Mammary epithelial cell (primary cell): ENCODE measurements at regions of chr4 and their contacts with region 1.

Region 1: DNA sequence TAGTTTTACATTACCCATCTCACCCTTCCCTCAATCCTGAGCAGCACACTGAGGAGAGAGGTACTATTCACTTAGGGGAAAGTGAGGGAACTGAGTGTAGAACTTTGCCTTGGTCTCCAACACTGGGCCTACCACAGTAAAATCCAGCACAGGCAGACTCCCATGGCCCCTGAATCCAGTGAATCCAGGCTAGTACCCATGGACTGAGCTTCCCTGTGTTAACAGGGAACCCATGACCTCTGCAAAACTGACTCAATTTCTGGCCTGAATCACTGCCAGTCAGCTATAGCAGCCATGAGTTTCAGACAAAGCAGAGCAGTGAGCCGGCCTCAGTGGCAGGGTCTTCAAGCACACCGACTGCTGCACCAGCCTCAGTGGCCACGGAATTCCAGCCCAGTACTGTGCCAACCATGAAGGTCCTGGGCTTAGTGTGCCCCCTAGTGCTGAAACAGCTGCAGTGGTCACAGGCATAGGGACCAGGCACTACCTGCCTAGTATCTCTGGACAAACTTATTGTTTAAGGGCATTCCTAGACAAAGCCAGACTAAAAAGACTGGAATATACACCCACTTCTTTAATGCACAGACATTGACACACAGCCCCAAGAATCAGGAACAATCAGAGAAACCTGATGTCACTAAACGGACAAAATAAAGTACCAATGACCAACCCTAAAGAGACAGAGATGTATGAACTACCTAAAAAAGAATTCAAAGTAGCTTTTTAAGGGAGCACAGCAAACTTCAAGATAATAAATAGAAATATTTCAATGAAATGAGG is 127.4 kb upstream of the RPL34 start:
- DNase-seq: peak; percentile 39
- H3K4me3 ChIP-seq: no peak overlapping the region
- H3K27ac ChIP-seq: no peak overlapping the region
- H3K4me1 ChIP-seq: no peaks in the 10 kb centered on the region
- H3K27me3 ChIP-seq: peaks cover 11% of the 10 kb centered on the region
- CTCF ChIP-seq: peak; percentile 72 to 89

Region 2: DNA sequence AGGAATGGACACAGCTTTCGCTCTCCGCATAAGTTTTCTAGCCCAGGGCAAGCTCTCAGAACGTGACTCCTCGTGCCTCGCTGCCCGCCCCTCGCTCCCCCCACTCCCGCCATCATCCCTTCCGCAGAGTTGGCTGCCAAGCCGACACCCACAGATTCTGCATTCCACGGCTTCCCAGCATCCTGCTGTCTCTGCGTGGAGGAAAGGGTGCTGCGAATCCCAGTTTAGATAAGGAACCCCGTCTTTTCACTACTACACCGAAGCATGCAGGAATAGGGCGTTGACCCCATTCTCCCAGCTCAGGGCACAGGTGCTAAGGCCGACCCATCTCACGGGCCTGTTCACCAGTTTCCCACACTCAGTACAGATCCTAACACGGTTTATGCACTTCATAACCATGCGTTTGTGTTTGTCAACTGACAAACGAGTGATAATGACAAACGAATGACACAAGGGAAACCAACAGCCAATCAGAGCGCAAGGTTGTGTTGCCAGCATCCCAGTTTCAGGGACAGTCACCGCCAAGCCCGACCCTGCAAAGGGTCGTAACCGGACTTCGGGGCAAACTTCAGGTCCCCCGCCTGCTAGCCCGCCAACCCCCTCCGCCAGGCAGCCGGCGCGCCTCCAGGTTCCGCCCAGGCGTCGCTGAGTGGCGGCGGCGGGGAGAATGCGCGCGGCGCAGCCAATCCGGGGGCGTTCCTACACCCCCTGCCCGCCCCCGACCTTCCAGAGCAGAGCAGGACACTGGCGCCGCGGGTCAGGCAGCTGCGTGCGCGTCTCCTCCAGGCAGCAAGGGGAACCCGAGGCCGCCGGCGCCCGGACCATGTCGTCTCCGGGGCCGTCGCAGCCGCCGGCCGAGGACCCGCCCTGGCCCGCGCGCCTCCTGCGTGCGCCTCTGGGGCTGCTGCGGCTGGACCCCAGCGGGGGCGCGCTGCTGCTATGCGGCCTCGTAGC is 561.9 kb before region 1 on chr4 and contains the start of gene CYP2U1:
- CTCF ChIA-PET with region 1: no interaction called
- dilution Hi-C with region 1: no loop called
- in situ Hi-C with region 1: no loop called
- intact Hi-C with region 1: loop called (anchors 10 kb)
- DNase-seq: peak; percentile 73
- H3K4me3 ChIP-seq: peak within 1 kb of the TSS; percentile 52 to 78 (median 66)
- H3K27ac ChIP-seq: no peak within 1 kb of the TSS
- H3K4me1 ChIP-seq: peaks cover 24% of the 10 kb centered on the region
- H3K27me3 ChIP-seq: no peaks in the 10 kb centered on the region
- CTCF ChIP-seq: peak in 1 of 2 donors; percentile 8
- total RNA-seq, gene CYP2U1: 7.5 to 30.7 TPM

Region 3: GRCh38 chr4:108018040-108018883 is 474.7 kb before region 1 on chr4:
- CTCF ChIA-PET with region 1: no interaction called
- dilution Hi-C with region 1: no loop called
- in situ Hi-C with region 1: no loop called
- intact Hi-C with region 1: loop called (anchors 1 kb)
- DNase-seq: peak; percentile 54
- H3K4me3 ChIP-seq: no peak overlapping the region
- H3K27ac ChIP-seq: no peak overlapping the region
- H3K4me1 ChIP-seq: no peaks in the 10 kb centered on the region
- H3K27me3 ChIP-seq: no peaks in the 10 kb centered on the region
- CTCF ChIP-seq: peak; percentile 84 to 89

Region 4: GRCh38 chr4:108030332-108030731 is 462.7 kb before region 1 on chr4:
- CTCF ChIA-PET with region 1: no interaction called
- dilution Hi-C with region 1: no loop called
- in situ Hi-C with region 1: no loop called
- intact Hi-C with region 1: loop called (anchors 1 kb)
- DNase-seq: peak; percentile 63
- H3K4me3 ChIP-seq: no peak overlapping the region
- H3K27ac ChIP-seq: no peak overlapping the region
- H3K4me1 ChIP-seq: no peaks in the 10 kb centered on the region
- H3K27me3 ChIP-seq: no peaks in the 10 kb centered on the region
- CTCF ChIP-seq: peak; percentile 43 to 63

Region 5: DNA sequence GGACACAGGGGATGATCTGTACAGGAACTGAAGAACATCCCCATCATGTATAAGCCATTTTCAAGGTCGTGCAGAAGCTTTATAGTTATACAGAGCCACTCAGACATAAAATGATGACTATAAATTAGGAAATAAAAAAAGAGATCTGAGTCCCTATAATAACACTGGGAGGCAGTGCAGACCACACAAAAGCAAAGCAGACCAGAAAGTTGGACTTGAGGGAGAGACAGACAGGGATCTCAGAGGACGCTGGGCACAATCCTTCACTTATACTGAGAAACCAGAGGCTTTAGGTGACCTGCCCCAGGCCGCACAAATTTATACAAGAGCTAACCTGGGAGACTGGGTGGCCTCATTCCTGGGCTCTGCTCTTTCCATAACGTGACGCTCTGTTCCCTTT is 432.8 kb before region 1 on chr4:
- CTCF ChIA-PET with region 1: interaction called, 4 read pairs
- dilution Hi-C with region 1: no loop called
- in situ Hi-C with region 1: no loop called
- intact Hi-C with region 1: loop called (anchors 1 kb)
- DNase-seq: peak; percentile 22
- H3K4me3 ChIP-seq: no peak overlapping the region
- H3K27ac ChIP-seq: no peak overlapping the region
- H3K4me1 ChIP-seq: peaks cover 9% of the 10 kb centered on the region
- H3K27me3 ChIP-seq: no peaks in the 10 kb centered on the region
- CTCF ChIP-seq: peak; percentile 23 to 41

Region 6: GRCh38 chr4:108172753-108173598 is 320.0 kb before region 1 on chr4:
- CTCF ChIA-PET with region 1: no interaction called
- dilution Hi-C with region 1: no loop called
- in situ Hi-C with region 1: no loop called
- intact Hi-C with region 1: loop called (anchors 5 kb)
- DNase-seq: peak; percentile 29
- H3K4me3 ChIP-seq: peak overlapping the region; percentile 32 to 46 (median 40)
- H3K27ac ChIP-seq: no peak overlapping the region
- H3K4me1 ChIP-seq: peaks cover 16% of the 10 kb centered on the region
- H3K27me3 ChIP-seq: peaks cover 50% of the 10 kb centered on the region
- CTCF ChIP-seq: no peak